OCI-LY7 (cell line): ENCODE measurements at regions of chr7 and their contacts with region 1.

Region 1: DNA sequence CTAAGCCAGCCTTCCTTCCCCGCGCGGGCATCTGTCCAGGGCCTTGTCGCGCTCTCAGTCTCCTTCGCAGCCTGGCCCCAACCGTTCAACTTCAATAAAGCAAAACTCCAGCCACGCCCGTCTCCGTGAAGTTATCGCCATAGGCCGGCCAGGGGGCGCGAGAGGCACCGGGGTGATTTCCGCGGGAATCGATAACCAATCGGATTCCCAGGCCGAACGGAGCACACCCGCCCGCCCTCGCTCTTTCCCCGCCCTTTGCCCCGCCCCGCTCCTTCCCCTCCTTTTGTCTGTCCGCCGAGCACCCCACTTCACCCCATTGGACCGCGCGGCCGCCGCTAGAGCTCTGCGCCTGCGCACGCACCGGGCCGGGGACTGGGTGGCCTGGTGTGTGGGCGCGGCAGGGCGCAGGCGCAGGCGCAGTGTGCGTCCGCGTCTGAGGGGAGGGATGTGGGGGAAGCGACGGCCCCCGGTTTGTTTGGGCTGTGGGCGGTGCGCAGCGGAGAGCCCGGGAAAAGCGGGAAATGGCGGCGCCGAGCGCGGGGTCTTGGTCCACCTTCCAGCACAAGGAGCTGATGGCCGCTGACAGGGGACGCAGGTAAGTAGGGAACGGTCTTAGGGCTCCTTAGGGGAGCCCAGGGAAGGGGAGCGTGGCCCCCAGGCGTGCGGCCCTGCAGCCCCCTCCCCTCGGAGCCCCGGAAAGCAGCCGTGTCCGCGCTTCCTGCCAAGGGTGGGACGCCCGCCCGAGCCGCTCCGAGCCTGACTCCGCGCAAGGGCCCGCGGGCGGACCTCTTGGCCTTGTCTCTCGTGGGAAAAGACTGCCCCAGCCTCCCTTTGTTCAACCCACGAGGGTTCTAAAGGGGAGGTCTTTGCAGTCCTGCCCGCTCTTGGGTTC is at the start of gene CASP2:
- DNase-seq: peak; percentile 96
- H3K4me3 ChIP-seq: peak within 1 kb of the TSS; percentile 95
- H3K27ac ChIP-seq: peak within 1 kb of the TSS; percentile 66
- H3K4me1 ChIP-seq: peaks cover 36% of the 10 kb centered on the region
- CTCF ChIP-seq: 0 out of 2 replicates have a peak, but pooled peaks have one; percentile 34
- total RNA-seq, gene CASP2: 27.2 and 33.9 TPM in 2 replicates

Region 2: DNA sequence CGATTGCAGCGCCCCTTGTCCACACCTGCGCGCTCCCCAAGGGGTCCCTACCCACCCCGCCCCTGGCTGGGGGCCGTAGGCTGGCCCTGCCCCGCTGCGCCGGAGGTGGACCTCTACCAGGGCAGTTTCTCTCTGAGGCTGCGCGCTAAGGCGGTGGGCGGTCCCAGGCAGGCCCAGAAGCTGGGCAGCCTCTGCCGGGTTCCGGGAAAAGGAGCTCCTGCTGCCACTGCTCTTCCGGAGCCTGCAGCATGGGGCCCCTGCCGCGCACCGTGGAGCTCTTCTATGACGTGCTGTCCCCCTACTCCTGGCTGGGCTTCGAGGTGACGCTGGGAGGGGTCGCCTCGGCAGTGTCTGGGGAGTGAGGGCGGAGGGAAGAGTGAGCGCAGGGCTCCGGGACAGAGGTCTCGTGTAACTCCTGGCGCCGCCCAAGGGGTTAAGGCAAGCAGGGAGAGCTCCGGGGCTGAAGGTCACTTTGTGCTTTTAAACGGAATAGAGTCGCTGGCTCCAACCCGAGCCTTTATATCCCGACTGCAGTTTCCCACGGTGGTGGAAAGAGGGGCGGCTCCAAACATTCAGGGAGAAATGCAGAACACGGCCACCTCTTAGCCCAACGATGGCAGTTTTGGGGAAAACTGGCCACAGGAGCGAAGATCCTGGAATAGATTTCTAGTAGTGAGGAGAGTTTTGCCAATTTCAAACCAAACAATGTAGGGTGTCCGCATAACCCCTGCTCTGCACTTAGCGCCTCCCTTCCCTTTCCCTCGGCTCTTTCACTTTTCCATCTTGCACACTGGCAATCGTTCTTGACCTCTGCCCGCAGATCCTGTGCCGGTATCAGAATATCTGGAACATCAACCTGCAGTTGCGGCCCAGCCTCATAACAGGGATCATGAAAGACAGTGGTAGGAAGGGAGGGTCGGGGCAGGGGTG is 24.6 kb before region 1 on chr7 and contains the start of gene GSTK1:
- CTCF ChIA-PET with region 1: no interaction called
- POLR2A ChIA-PET with region 1: interaction called, 12 read pairs
- intact Hi-C with region 1: no loop called
- DNase-seq: peak; percentile 66
- H3K4me3 ChIP-seq: peak within 1 kb of the TSS; percentile 71
- H3K27ac ChIP-seq: no peak within 1 kb of the TSS
- H3K4me1 ChIP-seq: peaks cover 8% of the 10 kb centered on the region
- CTCF ChIP-seq: no peak
- total RNA-seq, gene GSTK1: 37.8 and 39.4 TPM in 2 replicates

Region 3: DNA sequence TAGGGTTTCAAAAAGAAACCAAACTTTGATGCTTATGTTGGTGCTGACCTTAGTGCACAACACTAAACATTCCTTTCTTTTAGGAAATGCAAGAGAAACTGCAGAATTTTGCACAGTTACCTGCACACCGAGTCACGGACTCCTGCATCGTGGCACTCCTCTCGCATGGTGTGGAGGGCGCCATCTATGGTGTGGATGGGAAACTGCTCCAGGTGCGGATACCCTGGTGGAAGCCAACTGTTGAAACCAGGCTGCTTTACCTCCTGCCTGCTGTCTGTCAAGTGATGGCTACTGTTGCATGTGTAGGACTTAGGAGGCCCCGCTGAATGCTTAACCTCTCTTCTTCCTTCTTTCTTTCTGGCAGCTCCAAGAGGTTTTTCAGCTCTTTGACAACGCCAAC is 11.7 kb after region 1 on chr7:
- CTCF ChIA-PET with region 1: interaction called, 3 read pairs
- POLR2A ChIA-PET with region 1: interaction called, 12 read pairs
- intact Hi-C with region 1: no loop called
- DNase-seq: peak; percentile 55
- H3K4me3 ChIP-seq: no peak overlapping the region
- H3K27ac ChIP-seq: no peak overlapping the region
- H3K4me1 ChIP-seq: peaks cover 14% of the 10 kb centered on the region
- CTCF ChIP-seq: peak; percentile 87